Endothelial cell of umbilical vein (primary cell): ENCODE measurements at regions of chr19 and their contacts with region 1.

Region 1: GRCh38 chr19:11346092-11346940 is at the starts of genes CCDC159 and TMEM205:
- DNase-seq: peak; percentile 99
- H3K4me3 ChIP-seq: peak within 1 kb of the TSS; percentile 36 to 93 (median 72)
- H3K27ac ChIP-seq: peak within 1 kb of the TSS; percentile 48
- H3K4me1 ChIP-seq: peaks cover 21% of the 10 kb centered on the region
- H3K27me3 ChIP-seq: no peaks in the 10 kb centered on the region
- CTCF ChIP-seq: no peak
- POLR2A ChIP-seq: peak; percentile 79
- total RNA-seq, gene CCDC159: 30.3 and 31.6 TPM in 2 replicates
- total RNA-seq, gene TMEM205: 57.3 and 58.9 TPM in 2 replicates

Region 2: DNA sequence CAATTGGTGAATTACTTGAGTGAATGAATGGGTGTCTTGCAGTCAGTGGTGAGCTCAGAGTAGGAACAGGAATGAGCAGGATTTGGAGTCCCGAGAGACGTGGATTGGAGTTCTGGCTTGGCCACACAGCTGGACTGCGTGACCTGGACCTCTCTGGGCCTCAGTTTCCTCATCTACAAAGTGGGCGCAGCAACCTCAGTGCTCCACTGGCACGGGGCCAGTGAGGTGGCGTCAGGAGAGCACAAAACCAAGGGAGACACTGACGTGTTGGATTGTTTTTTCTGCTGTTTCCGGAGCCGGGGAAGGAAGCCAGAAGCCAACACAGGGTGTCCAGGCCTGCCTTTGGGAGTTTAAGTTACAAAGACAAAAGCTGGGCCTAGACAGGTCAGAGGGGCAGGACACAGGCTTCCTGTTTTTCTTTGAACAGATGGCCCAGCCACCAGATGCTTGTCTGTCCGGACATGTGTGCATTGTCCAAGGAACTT is 77.5 kb before region 1 on chr19:
- CTCF ChIA-PET with region 1: interaction called, 4 read pairs
- POLR2A ChIA-PET with region 1: no interaction called
- dilution Hi-C with region 1: no loop called
- intact Hi-C with region 1: loop called (anchors 2 kb)
- DNase-seq: peak; percentile 100
- H3K4me3 ChIP-seq: no peak overlapping the region
- H3K27ac ChIP-seq: peak overlapping the region; percentile 99
- H3K4me1 ChIP-seq: peaks cover 47% of the 10 kb centered on the region
- H3K27me3 ChIP-seq: no peaks in the 10 kb centered on the region
- CTCF ChIP-seq: no peak
- POLR2A ChIP-seq: peak; percentile 89

Region 3: GRCh38 chr19:11299946-11300810 is 46.1 kb before region 1 on chr19:
- CTCF ChIA-PET with region 1: no interaction called
- POLR2A ChIA-PET with region 1: no interaction called
- dilution Hi-C with region 1: no loop called
- intact Hi-C with region 1: no loop called
- DNase-seq: no peak
- H3K4me3 ChIP-seq: no peak overlapping the region
- H3K27ac ChIP-seq: no peak overlapping the region
- H3K4me1 ChIP-seq: no peaks in the 10 kb centered on the region
- H3K27me3 ChIP-seq: peaks cover 0 to 1% of the 10 kb centered on the region in 2 experiments
- CTCF ChIP-seq: no peak
- POLR2A ChIP-seq: no peak

Region 4: GRCh38 chr19:11374433-11375142 is 28.3 kb after region 1 on chr19 and contains the start of gene SWSAP1:
- CTCF ChIA-PET with region 1: interaction called, 9 read pairs
- POLR2A ChIA-PET with region 1: interaction called, 4 read pairs
- dilution Hi-C with region 1: no loop called
- intact Hi-C with region 1: loop called (anchors 1 kb)
- DNase-seq: peak; percentile 100
- H3K4me3 ChIP-seq: peak within 1 kb of the TSS; percentile 35 to 65 (median 56)
- H3K27ac ChIP-seq: peak within 1 kb of the TSS; percentile 70
- H3K4me1 ChIP-seq: peaks cover 39% of the 10 kb centered on the region
- H3K27me3 ChIP-seq: no peaks in the 10 kb centered on the region
- CTCF ChIP-seq: no peak
- POLR2A ChIP-seq: peak; percentile 68
- total RNA-seq, gene SWSAP1: 2.7 and 3.7 TPM in 2 replicates

Region 5: GRCh38 chr19:11435058-11435832 is 88.9 kb after region 1 on chr19 and contains the starts of genes ODAD3 and PRKCSH:
- CTCF ChIA-PET with region 1: interaction called, 5 read pairs
- POLR2A ChIA-PET with region 1: no interaction called
- dilution Hi-C with region 1: no loop called
- intact Hi-C with region 1: loop called (anchors 1 kb)
- DNase-seq: peak; percentile 100
- H3K4me3 ChIP-seq: peak within 1 kb of the TSS; percentile 71 to 88 (median 82)
- H3K27ac ChIP-seq: peak within 1 kb of the TSS; percentile 88
- H3K4me1 ChIP-seq: peaks cover 12% of the 10 kb centered on the region
- H3K27me3 ChIP-seq: no peaks in the 10 kb centered on the region
- CTCF ChIP-seq: peak; percentile 86 to 89
- POLR2A ChIP-seq: peak; percentile 83
- total RNA-seq, gene ODAD3: 0.97 TPM in 1 of 2 replicates, not detected in the other
- total RNA-seq, gene PRKCSH: 387 and 425 TPM in 2 replicates